Heart left ventricle (tissue), 16 donors: ENCODE measurements at regions of chr3 and their contacts with region 1.

Region 1: GRCh38 chr3:191412759-191413158 is 48.2 kb upstream of the PYDC2 start:
- DNase-seq: no peak
- ATAC-seq: no peak
- H3K4me3 ChIP-seq: no peak overlapping the region
- H3K27ac ChIP-seq: no peak overlapping the region
- H3K4me1 ChIP-seq: peaks cover 0 to 3% (median 0%) of the 10 kb centered on the region in 12 donors
- H3K27me3 ChIP-seq: no peaks in the 10 kb centered on the region
- CTCF ChIP-seq: no peak
- POLR2A ChIP-seq: no peak

Region 2: GRCh38 chr3:191328962-191329653 is 83.7 kb before region 1 on chr3 and contains the start of gene CCDC50:
- intact Hi-C with region 1: no loop called
- DNase-seq: peak; percentile 91 to 92 (median 91)
- ATAC-seq: peak; percentile 72 to 94 (median 90)
- H3K4me3 ChIP-seq: peak within 1 kb of the TSS; percentile 72 to 99 (median 93)
- H3K27ac ChIP-seq: peak within 1 kb of the TSS; percentile 92 to 98 (median 96)
- H3K4me1 ChIP-seq: peaks cover 7 to 50% (median 34%) of the 10 kb centered on the region in 12 donors
- H3K27me3 ChIP-seq: no peaks in the 10 kb centered on the region
- CTCF ChIP-seq: peak in 1 of 12 donors; percentile 19
- POLR2A ChIP-seq: peak in 1 of 2 donors; percentile 59
- total RNA-seq, gene CCDC50: 42.9 to 75.7 (median 57.1) TPM

Region 3: DNA sequence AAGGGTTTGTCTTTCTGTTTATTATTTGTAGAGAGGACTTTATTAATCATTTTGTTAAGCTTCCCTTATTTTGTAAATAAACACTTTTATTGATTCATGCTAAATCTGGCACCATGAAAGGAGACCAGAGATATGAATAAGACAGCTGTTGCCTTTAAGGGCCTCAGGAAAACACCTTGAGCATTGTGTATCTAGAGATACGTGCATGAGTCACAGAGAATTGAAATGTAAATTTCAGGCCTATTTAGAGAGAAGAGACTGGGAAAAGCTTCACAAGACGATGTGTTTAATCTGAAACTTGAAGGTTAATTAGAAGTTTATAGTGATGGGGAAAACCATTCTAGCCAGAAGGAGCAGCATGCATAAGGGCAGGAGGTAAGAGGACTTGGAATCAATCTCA is 53.8 kb before region 1 on chr3:
- intact Hi-C with region 1: no loop called
- DNase-seq: no peak
- ATAC-seq: no peak
- H3K4me3 ChIP-seq: no peak overlapping the region
- H3K27ac ChIP-seq: no peak overlapping the region
- H3K4me1 ChIP-seq: peaks cover 3 to 48% (median 25%) of the 10 kb centered on the region in 12 donors
- H3K27me3 ChIP-seq: no peaks in the 10 kb centered on the region
- CTCF ChIP-seq: no peak
- POLR2A ChIP-seq: no peak

Region 4: GRCh38 chr3:191813245-191813644 is 400.5 kb after region 1 on chr3:
- intact Hi-C with region 1: loop called in 2 of 10 experiments (anchors 5 to 10 kb)
- DNase-seq: no peak
- ATAC-seq: no peak
- H3K4me3 ChIP-seq: no peak overlapping the region
- H3K27ac ChIP-seq: no peak overlapping the region
- H3K4me1 ChIP-seq: no peaks in the 10 kb centered on the region
- H3K27me3 ChIP-seq: no peaks in the 10 kb centered on the region
- CTCF ChIP-seq: no peak
- POLR2A ChIP-seq: no peak

Region 5: DNA sequence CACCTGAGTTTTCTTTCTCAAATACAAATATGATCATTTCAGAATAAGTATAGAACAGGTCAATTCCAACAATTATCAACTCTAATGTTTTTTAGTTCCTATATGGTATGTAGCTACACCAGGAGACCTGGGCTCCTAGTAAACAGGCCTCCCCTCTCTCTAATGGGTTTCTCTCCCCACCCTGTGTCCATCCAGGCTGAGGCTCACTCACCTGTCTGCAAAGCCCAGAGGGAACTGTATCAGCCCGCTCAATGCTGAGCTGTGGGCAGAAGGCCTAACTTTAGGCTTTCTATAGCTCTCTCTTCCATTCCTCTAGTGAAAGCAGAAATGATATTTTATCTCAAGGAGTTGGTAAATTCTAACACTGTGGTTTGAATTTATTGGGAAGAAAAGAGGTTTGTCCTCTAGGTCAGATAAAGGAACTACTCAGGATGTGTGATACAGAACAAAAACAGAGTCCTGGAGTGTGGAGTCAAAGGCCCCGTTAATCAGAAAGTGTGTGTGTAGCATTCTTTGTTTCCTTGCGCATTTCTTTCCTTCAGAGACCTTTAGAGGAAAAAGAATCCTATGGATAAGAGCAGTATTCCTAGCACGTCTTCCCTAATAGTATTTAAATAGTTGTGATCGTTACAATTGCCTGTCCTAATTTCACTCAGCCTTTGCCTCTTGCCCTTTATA is 457.1 kb after region 1 on chr3:
- intact Hi-C with region 1: no loop called
- DNase-seq: no peak
- ATAC-seq: no peak
- H3K4me3 ChIP-seq: no peak overlapping the region
- H3K27ac ChIP-seq: no peak overlapping the region
- H3K4me1 ChIP-seq: no peaks in the 10 kb centered on the region
- H3K27me3 ChIP-seq: no peaks in the 10 kb centered on the region
- CTCF ChIP-seq: no peak
- POLR2A ChIP-seq: no peak

Region 6: GRCh38 chr3:192122832-192123594 is 710.3 kb after region 1 on chr3:
- intact Hi-C with region 1: loop called in 1 of 10 experiments (anchors 10 kb)
- DNase-seq: peak in 1 of 5 donors; percentile 18
- ATAC-seq: peak in 1 of 4 donors; percentile 49
- H3K4me3 ChIP-seq: no peak overlapping the region
- H3K27ac ChIP-seq: no peak overlapping the region
- H3K4me1 ChIP-seq: peaks cover 0 to 5% (median 0%) of the 10 kb centered on the region in 12 donors
- H3K27me3 ChIP-seq: no peaks in the 10 kb centered on the region
- CTCF ChIP-seq: no peak
- POLR2A ChIP-seq: no peak

Region 7: DNA sequence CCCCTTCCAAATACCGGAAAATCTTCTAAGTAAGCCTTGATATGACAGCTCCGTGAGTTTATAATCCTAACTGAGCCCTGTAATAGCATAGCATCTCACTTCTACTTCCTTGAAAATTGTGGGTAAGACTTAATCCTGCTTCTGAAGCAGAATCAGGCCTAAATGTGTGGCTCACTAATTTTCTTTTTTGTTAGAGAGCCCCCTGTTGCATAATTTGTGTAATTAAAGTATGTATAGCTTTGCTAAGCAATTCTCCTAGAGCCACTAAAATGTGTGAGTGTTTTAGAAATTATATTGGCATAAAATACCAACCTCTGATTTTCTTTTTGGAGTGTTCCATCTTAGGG is 1010.2 kb after region 1 on chr3:
- intact Hi-C with region 1: loop called in 1 of 10 experiments (anchors 5 kb)
- DNase-seq: no peak
- ATAC-seq: peak in 1 of 4 donors; percentile 38
- H3K4me3 ChIP-seq: no peak overlapping the region
- H3K27ac ChIP-seq: no peak overlapping the region
- H3K4me1 ChIP-seq: peaks cover 0 to 7% (median 0%) of the 10 kb centered on the region in 12 donors
- H3K27me3 ChIP-seq: no peaks in the 10 kb centered on the region
- CTCF ChIP-seq: peak in 9 of 12 donors; percentile 11 to 61 (median 32)
- POLR2A ChIP-seq: no peak

Region 8: GRCh38 chr3:192444096-192444790 is 1031.5 kb after region 1 on chr3:
- intact Hi-C with region 1: loop called in 8 of 10 experiments (anchors 2 to 5 kb)
- DNase-seq: peak; percentile 33 to 76 (median 44)
- ATAC-seq: peak; percentile 48 to 75 (median 72)
- H3K4me3 ChIP-seq: no peak overlapping the region
- H3K27ac ChIP-seq: no peak overlapping the region
- H3K4me1 ChIP-seq: peaks cover 0 to 26% (median 8%) of the 10 kb centered on the region in 12 donors
- H3K27me3 ChIP-seq: peaks cover 0 to 10% (median 0%) of the 10 kb centered on the region in 9 donors
- CTCF ChIP-seq: peak; percentile 95 to 100 (median 98)
- POLR2A ChIP-seq: no peak